ENCODE measurements at regions of chr2 and their contacts with region 1.

Region 1: GRCh38 chr2:218659258-218659987 is at the starts of genes BCS1L and ZNF142:
- DNase-seq: peak; percentile 99
- ATAC-seq: peak; percentile 97
- H3K4me3 Mint-ChIP-seq: peak within 1 kb of the TSS; percentile 92
- H3K27ac Mint-ChIP-seq: peak within 1 kb of the TSS; percentile 92
- H3K4me1 Mint-ChIP-seq: peaks cover 29% of the 10 kb centered on the region
- H3K27me3 Mint-ChIP-seq: no peaks in the 10 kb centered on the region
- CTCF ChIP-seq: no peak
- total RNA-seq, gene BCS1L: 69.6 to 76.3 TPM
- total RNA-seq, gene ZNF142: 30.4 to 33.7 TPM

Region 2: DNA sequence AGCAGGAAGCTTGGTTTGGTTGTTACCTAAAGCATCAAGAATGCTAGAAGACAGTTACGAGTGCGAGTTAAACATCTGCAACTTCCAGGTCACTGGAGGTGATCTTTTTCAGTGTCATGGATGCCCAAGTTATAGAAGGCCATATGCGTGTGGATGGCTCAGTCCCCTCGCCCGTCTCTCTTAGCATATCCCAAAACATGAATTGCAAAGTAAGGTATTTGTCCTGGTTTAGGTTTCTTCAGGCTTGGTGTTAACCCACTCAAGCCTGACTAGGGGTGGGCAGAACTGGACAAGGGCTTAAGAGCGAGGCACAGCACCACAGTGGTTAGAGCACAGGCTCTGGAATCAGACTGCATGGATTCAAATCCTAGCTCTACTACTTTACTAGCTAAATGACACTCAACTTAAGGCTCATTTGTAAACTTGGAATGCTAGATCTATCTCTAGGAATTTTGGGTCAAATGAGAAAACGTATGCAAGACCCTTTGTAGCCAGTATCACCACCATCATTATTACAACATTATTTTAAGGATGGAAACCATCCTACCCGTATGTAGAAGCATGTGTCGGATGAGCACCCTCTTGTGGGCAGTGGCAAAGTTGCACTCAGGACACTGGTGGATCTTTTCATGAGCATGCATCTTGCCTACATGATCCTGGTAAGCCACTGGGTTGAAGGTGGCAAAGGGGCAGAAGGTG is 11.2 kb before region 1 on chr2:
- CTCF ChIA-PET with region 1: interaction called, 57 read pairs
- POLR2A ChIA-PET with region 1: interaction called, 12 read pairs
- intact Hi-C with region 1: no loop called
- DNase-seq: peak; percentile 71
- ATAC-seq: peak; percentile 96
- H3K4me3 Mint-ChIP-seq: no peak overlapping the region
- H3K27ac Mint-ChIP-seq: no peak overlapping the region
- H3K4me1 Mint-ChIP-seq: peaks cover 10% of the 10 kb centered on the region
- H3K27me3 Mint-ChIP-seq: no peaks in the 10 kb centered on the region
- CTCF ChIP-seq: peak; percentile 71

Region 3: DNA sequence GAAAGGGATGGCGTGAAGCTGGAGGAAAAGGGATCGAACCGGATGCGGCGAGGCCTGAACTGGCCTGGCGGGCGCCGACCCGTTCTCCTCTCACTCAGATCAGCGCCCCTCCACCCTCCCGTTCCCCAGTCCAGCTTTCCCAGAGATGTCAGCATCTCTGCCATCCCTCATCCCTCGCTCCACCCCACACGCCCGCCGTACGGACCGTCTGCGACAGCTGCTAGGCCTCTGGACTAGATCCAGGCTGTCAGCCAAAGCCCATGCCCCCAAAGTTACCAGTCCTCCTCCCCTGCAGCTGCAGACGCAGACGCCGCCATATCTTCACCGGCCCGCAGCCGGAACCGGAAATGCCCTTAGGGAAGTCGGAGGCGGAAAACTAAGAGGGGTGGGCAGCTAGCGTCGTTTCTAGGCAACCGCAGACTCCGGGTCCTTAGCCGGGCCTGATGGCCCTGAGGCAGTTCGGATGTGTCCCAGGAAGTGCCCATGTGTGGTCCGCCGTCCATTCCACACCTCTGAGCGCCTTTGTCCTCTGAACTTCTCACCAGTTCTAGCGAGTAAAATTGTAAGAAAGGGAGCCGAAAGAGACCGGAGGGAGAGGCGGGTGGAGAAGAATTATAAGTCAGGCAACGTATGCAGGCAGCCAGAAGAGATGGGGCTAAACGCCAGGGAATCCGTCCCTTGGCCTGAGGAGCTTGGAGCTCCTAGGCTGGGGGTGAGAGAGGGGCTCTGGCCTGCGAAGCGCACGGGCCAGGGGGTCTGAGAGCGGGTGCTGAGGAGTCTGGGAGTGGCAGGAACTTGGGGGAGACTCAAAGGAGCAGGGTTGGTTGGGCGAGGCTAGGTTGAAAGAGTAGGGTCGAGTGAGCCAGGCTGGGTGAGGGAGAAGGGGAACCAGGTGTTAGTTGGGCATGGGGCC is 12.5 kb after region 1 on chr2 and contains the starts of genes RNF25 and STK36:
- CTCF ChIA-PET with region 1: interaction called, 30 read pairs
- POLR2A ChIA-PET with region 1: interaction called, 61 read pairs
- intact Hi-C with region 1: no loop called
- DNase-seq: peak; percentile 90
- ATAC-seq: peak; percentile 98
- H3K4me3 Mint-ChIP-seq: peak within 1 kb of the TSS; percentile 96
- H3K27ac Mint-ChIP-seq: peak within 1 kb of the TSS; percentile 96
- H3K4me1 Mint-ChIP-seq: peaks cover 16% of the 10 kb centered on the region
- H3K27me3 Mint-ChIP-seq: no peaks in the 10 kb centered on the region
- CTCF ChIP-seq: no peak
- total RNA-seq, gene RNF25: 14.7 to 17.0 TPM
- total RNA-seq, gene STK36: 11.6 to 14.9 TPM

Region 4: GRCh38 chr2:218745559-218746469 is 86.4 kb after region 1 on chr2:
- CTCF ChIA-PET with region 1: no interaction called
- POLR2A ChIA-PET with region 1: no interaction called
- intact Hi-C with region 1: no loop called
- DNase-seq: no peak
- ATAC-seq: no peak
- H3K4me3 Mint-ChIP-seq: no peak overlapping the region
- H3K27ac Mint-ChIP-seq: peak overlapping the region; percentile 44
- H3K4me1 Mint-ChIP-seq: peaks cover 19% of the 10 kb centered on the region
- H3K27me3 Mint-ChIP-seq: no peaks in the 10 kb centered on the region
- CTCF ChIP-seq: no peak

Measured in activated CD8-positive, alpha-beta T cell treated with anti-CD3 and anti-CD28 coated beads for 36 hours (primary cell).